Activated CD8-positive, alpha-beta memory T cell treated with anti-CD3 and anti-CD28 coated beads, Interleukin-2, amount 10 ng/mL, durations not matched to agents 7 days and 5 days (primary cell): ENCODE measurements at regions of chr12 and their contacts with region 1.

Region 1: DNA sequence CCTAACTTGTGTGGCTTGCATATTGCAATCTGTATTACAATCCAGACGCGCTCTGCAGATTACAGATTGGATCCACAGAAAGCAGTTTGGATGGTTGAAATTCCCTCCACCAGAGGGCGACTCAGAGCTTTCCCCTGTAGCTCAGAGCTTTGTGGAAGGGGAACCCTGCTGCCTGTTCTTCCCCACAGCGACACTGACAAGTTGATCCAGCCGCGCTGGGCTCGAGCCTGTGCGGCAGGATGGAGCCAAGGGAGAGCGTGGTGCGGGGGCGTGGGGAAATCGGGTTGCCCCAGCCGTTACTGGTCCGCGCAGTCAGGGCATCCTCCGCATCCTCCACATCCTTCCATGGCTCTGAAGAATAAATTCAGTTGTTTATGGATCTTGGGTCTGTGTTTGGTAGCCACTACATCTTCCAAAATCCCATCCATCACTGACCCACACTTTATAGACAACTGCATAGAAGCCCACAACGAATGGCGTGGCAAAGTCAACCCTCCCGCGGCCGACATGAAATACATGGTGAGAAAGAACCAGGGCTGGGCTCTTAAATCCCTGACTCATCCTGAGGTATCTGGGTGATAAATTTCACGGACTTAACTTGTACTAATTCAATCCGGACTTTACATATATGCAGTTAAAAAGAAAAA is at the start of gene GLIPR1L1:
- DNase-seq: peak; percentile 90
- ATAC-seq: peak; percentile 84
- H3K4me3 Mint-ChIP-seq: peak within 1 kb of the TSS; percentile 64
- H3K27ac Mint-ChIP-seq: no peak within 1 kb of the TSS
- H3K4me1 Mint-ChIP-seq: peaks cover 34% of the 10 kb centered on the region
- H3K27me3 Mint-ChIP-seq: peaks cover 27% of the 10 kb centered on the region
- total RNA-seq, gene GLIPR1L1: not detected

Region 2: DNA sequence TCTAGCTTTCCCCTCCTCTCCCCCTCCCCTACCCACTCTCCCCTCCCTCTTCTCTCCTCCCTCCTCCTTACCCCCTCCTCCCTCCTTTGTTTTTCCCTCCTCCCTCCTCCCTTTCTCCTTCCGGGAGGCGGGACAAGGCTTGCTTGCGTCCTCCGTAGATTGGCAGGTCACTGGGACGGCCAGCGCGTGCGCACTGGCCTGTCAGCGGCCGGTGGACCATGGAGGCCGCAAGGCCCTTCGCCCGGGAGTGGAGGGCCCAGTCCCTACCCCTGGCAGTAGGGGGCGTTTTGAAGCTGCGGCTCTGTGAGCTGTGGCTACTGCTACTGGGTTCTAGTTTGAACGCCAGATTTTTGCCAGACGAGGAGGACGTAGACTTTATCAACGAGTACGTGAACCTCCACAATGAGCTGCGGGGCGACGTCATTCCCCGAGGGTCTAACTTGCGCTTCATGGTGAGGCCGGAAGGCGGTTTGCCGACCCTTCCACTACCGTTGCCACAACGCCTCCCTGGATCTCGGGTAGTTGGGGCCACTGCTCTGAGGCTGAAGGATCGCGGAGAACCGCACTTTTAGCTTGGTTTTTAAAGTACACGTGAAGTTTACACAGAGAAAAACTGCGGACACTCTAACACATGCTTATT is 56.5 kb after region 1 on chr12 and contains the start of gene GLIPR1L2:
- CTCF ChIA-PET with region 1: interaction called, 25 read pairs
- DNase-seq: peak; percentile 96
- ATAC-seq: peak; percentile 98
- H3K4me3 Mint-ChIP-seq: peak within 1 kb of the TSS; percentile 85
- H3K27ac Mint-ChIP-seq: peak within 1 kb of the TSS; percentile 93
- H3K4me1 Mint-ChIP-seq: peaks cover 41% of the 10 kb centered on the region
- H3K27me3 Mint-ChIP-seq: no peaks in the 10 kb centered on the region
- total RNA-seq, gene GLIPR1L2: not detected